Lower leg skin (tissue), 4 donors: ENCODE measurements at regions of chr2 and their contacts with region 1.

Region 1: GRCh38 chr2:225889446-225889850 is 489.9 kb downstream of the NYAP2 start:
- DNase-seq: peak in 1 of 2 donors; percentile 28
- H3K4me3 ChIP-seq: no peak overlapping the region
- CTCF ChIP-seq: peak in 1 of 3 donors; percentile 57
- POLR2A ChIP-seq: no peak

Region 2: GRCh38 chr2:224492531-224492930 is 1396.9 kb before region 1 on chr2:
- intact Hi-C with region 1: no loop called
- DNase-seq: no peak
- H3K4me3 ChIP-seq: no peak overlapping the region
- CTCF ChIP-seq: no peak
- POLR2A ChIP-seq: no peak

Region 3: GRCh38 chr2:225670111-225670974 is 219.1 kb before region 1 on chr2:
- intact Hi-C with region 1: loop called (anchors 10 kb)
- DNase-seq: no peak
- H3K4me3 ChIP-seq: no peak overlapping the region
- CTCF ChIP-seq: no peak
- POLR2A ChIP-seq: no peak

Region 4: DNA sequence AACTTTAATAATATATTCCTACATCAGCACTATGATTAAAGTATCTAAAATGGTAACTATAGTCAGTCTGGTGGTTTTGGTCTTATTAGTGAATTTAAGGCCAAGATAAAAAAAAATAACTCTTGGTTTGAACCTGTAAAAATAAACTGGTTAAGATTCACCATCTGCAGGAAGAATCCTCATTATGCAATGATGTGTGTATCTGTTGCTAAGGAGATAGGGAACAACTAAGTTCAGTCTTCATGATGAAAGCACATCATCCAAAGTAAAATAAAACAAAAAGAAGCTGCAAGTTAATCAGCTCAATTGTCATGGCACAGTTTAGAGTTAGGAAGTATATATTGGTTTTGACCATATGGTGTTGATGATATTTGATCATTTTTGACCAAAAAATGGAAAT is 24.0 kb before region 1 on chr2:
- intact Hi-C with region 1: no loop called
- DNase-seq: no peak
- H3K4me3 ChIP-seq: no peak overlapping the region
- CTCF ChIP-seq: no peak
- POLR2A ChIP-seq: no peak

Region 5: DNA sequence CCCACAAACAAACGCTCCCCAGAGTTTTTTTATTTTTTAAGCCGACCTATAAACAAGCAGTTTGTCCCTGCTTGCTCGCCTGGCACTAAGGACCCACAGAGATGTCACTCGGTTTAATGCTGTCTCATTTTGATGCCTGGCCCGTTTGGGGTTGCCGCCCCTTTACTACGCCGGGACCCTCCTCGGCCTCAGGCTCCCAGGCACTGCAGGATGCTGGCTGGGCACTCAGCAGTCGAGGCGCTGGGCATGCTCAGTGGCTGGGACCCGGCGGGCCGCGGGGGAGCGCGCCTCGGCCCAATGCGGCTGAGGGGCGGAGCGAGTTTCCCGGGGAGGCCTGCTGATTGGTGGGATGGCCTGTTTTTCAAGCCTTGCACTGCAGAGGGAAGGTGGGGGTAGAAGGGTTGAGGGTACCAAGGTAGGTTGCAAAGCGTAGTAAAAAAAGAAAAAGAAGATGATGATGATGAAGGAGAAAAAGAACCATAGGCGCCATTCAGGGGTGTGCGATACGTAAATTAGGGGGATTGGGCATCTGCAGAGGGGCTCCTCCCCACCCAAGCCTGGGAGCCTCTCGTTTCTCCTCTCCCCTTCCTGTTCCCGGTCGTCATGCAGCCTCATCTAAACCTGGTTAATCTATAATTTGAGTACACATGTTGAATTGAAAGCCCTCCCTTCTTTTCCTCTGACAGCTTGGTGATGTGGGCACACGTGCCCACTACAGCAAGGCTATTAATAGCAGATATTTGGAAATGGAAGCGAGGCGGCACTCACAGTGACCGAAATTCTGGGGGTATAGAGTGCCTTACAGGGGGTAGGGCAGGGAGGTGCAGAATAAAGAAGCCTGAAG is 911.7 kb after region 1 on chr2:
- intact Hi-C with region 1: loop called (anchors 10 kb)
- DNase-seq: peak; percentile 46 to 94
- H3K4me3 ChIP-seq: no peak overlapping the region
- CTCF ChIP-seq: no peak
- POLR2A ChIP-seq: no peak

Region 6: GRCh38 chr2:226891780-226892590 is 1002.5 kb after region 1 on chr2:
- intact Hi-C with region 1: no loop called
- DNase-seq: no peak
- H3K4me3 ChIP-seq: no peak overlapping the region
- CTCF ChIP-seq: no peak
- POLR2A ChIP-seq: no peak